Activated CD4-positive, alpha-beta memory T cell treated with anti-CD3 and anti-CD28 coated beads for 36 hours (primary cell): ENCODE measurements at regions of chr2 and their contacts with region 1.

Region 1: DNA sequence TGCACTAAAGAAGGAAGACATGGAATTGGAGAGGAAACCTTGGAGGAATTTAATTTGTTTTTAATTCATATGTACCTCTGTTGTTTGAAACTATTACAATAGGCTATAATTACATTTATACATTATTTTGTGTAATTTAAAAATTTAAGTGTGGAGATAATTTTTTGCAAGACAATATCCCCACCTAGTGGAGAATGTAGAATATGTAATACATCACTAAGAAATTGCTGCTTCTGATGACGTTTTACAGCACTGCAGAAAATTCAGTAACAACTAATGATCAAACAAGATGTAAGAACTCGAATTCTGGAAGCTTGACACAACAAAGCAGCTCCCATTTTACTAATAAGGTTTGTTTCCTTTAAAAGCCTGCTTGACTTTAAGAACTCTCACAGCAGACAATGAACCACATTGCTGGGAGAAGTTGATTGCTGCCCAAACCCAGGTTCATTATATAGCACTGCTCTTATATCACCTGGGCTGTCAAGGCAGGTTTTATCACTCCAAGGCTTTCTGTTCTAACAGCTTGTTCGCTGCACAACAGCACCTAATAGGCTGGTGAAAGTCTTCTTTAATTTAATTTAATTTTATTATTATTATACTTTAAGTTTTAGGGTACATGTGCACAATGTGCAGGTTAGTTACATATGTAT is 53.4 kb downstream of the THADA start:
- DNase-seq: no peak
- H3K4me3 Mint-ChIP-seq: no peak overlapping the region
- H3K27ac Mint-ChIP-seq: no peak overlapping the region
- H3K4me1 Mint-ChIP-seq: peaks cover 21% of the 10 kb centered on the region
- H3K27me3 Mint-ChIP-seq: no peaks in the 10 kb centered on the region

Region 2: DNA sequence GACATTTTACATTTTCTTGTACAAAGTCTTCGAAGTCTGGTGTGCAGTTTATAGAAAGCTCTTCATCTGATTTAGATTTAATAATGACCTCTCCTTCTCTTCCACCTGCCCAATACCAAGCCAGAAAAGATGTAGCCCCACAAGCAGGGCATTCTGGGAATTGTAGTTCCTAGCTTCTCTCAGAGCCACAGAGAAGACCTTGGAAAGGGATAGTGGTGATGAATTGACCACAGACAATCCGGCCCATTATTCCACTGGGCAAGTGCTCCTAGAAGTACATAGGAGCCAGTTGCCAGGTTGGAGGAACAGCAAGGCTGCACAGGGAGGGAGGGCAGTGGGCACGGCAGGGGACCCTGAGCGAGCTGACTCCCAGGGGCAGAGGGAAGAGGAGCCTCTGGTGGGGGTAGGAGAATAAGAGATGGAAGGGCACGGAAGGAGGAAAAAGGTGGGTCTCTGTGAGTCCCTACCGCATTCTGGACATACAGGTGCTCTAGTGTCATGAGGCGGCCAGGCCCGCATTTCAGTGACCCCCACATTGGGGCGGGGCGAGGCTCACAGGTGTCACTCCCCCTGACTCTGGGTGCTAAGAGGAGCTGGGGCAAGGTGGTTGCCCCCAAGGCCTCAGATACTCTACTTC is 597.5 kb before region 1 on chr2:
- CTCF ChIA-PET with region 1: interaction called, 11 read pairs
- POLR2A ChIA-PET with region 1: no interaction called
- intact Hi-C with region 1: loop called (anchors 1 kb)
- DNase-seq: no peak
- H3K4me3 Mint-ChIP-seq: no peak overlapping the region
- H3K27ac Mint-ChIP-seq: no peak overlapping the region
- H3K4me1 Mint-ChIP-seq: no peaks in the 10 kb centered on the region
- H3K27me3 Mint-ChIP-seq: no peaks in the 10 kb centered on the region

Region 3: GRCh38 chr2:43484323-43484930 is 58.0 kb before region 1 on chr2:
- CTCF ChIA-PET with region 1: interaction called, 13 read pairs
- POLR2A ChIA-PET with region 1: no interaction called
- intact Hi-C with region 1: loop called (anchors 2 kb)
- DNase-seq: no peak
- H3K4me3 Mint-ChIP-seq: no peak overlapping the region
- H3K27ac Mint-ChIP-seq: no peak overlapping the region
- H3K4me1 Mint-ChIP-seq: peaks cover 10% of the 10 kb centered on the region
- H3K27me3 Mint-ChIP-seq: no peaks in the 10 kb centered on the region

Region 4: DNA sequence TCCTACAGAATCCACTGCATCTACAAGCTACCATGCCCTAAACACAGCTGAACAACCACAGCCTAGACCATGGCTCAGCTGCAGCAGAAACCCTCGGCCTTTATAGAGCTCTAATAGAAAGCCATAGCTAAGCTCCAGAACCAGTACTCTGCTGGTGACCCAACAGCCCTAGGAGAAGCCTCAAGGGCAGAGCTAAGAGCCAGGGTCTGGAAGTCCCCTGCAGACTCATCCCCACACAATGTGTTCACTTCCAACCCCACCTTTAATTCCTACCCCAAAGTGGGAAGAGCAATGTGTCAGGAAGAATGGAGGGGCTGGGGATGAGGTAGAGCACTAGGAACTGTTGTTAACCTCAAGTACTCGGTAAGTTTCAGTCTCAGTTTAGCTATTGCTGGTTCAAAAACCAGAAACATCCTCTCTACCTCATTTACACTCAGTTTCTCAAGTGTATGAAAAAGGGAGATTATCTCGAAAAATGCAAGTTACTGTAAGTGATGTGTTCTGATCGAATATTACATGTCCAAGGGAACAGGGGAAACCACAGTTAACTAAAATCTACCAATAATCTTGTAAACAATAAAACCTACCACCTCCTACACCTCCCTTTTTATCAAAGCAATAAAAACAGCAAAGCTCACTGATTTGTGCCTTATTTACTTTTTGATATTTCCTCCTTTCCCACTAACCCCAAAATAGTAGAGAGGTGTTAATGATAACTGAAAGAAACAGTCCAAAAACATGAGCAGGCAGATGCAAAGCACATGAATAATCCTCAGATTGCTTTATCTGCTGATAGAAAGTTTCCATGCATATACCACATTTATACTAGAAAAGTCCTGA is 17.2 kb after region 1 on chr2:
- CTCF ChIA-PET with region 1: interaction called, 13 read pairs
- POLR2A ChIA-PET with region 1: interaction called, 12 read pairs
- intact Hi-C with region 1: no loop called
- DNase-seq: peak; percentile 38
- H3K4me3 Mint-ChIP-seq: peak overlapping the region; percentile 28
- H3K27ac Mint-ChIP-seq: peak overlapping the region; percentile 85
- H3K4me1 Mint-ChIP-seq: peaks cover 52% of the 10 kb centered on the region
- H3K27me3 Mint-ChIP-seq: no peaks in the 10 kb centered on the region

Region 5: DNA sequence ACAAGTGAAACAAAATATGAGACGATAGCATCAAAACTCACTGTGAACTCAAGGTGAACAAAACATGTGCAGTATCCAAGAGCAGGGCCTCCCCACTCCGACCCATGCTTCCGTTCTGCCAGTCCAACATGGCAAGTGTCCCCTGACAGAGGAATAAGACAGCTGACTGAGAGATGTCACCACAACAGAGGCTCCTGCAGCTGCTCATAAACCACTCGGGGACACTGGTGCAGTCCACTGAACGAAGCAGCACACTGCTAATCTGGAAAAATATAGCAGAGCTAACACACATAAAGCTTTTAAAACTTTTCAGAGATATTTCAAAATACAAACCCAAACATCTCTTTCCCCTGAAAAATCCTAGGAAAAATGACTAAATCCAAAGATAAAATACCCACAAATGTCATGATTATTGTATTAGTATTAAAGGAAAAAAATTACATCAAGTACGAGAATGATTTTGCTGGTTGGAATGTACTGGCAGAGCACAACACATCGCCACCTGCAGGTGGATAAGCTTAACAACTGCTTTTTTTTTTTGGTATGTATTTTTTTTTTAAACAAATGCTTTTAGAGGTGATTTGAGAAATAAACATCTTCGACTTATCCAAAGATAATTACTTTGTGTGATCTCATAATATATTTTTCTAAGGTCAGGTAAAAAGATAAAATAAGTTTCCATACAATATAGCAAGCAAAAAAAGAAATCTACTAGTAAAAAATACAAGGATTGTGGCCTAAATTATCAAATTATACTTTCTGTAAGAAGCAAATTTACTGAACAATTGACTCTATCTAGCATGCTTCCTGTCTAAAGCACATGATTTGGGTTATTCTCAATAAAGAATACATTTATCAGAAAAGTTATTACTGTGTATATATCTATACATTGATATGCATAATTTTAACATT is 34.8 kb after region 1 on chr2:
- CTCF ChIA-PET with region 1: interaction called, 29 read pairs
- POLR2A ChIA-PET with region 1: no interaction called
- intact Hi-C with region 1: no loop called
- DNase-seq: no peak
- H3K4me3 Mint-ChIP-seq: no peak overlapping the region
- H3K27ac Mint-ChIP-seq: no peak overlapping the region
- H3K4me1 Mint-ChIP-seq: peaks cover 41% of the 10 kb centered on the region
- H3K27me3 Mint-ChIP-seq: no peaks in the 10 kb centered on the region